AG04449 (cell line): ENCODE measurements at regions of chr9 and their contacts with region 1.

Region 1: GRCh38 chr9:97615439-97616072 is 17.6 kb downstream of the TSTD2 start:
- DNase-seq: peak; percentile 5
- H3K4me3 ChIP-seq: no peak overlapping the region
- CTCF ChIP-seq: peak; percentile 63

Region 2: DNA sequence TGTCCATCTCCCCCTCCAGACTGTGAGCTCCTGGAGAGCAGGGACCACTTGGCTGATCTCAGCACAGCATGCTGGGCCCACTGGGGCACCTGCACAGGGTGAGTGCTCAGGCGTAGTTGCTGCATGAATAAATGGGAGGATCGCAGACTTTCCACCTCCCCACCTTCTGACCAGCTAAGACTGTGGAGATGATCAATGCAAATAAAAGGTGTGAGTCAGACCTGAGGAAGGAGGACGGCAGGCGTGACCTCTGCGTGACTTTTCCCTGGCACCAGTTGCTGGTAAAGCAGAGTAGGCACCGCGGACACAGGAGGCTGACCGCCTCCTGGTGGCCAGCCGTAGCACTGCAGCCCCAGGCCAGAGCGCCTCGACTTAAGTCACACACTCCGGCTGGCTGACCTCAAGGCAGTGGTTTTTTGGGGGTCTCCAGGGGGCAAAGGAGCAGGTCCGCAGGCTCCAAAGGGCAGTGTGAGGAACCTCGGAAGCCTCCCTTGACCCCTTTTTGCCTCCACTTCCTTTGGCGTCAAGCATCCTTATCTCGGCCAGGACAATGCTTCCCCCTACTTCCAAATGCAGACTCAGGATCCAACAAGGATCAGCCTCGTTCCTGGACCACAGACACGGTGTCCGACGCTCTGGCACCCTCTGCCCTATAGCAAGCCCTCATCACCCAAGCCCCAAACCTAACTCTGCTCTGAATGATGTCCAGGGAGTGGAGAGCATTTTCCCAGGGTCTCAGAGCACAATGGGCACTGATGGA is 216.4 kb before region 1 on chr9:
- CTCF ChIA-PET with region 1: interaction called, 13 read pairs
- POLR2A ChIA-PET with region 1: no interaction called
- DNase-seq: peak; percentile 16
- H3K4me3 ChIP-seq: no peak overlapping the region
- CTCF ChIP-seq: peak; percentile 97

Region 3: GRCh38 chr9:97411789-97412625 is 203.5 kb before region 1 on chr9 and contains the start of gene TDRD7:
- CTCF ChIA-PET with region 1: interaction called, 83 read pairs
- POLR2A ChIA-PET with region 1: no interaction called
- DNase-seq: no peak
- H3K4me3 ChIP-seq: peak within 1 kb of the TSS; percentile 69
- CTCF ChIP-seq: peak; percentile 99

Region 4: GRCh38 chr9:97468658-97469448 is 146.7 kb before region 1 on chr9:
- CTCF ChIA-PET with region 1: interaction called, 780 read pairs
- POLR2A ChIA-PET with region 1: no interaction called
- DNase-seq: no peak
- H3K4me3 ChIP-seq: no peak overlapping the region
- CTCF ChIP-seq: peak; percentile 77

Region 5: DNA sequence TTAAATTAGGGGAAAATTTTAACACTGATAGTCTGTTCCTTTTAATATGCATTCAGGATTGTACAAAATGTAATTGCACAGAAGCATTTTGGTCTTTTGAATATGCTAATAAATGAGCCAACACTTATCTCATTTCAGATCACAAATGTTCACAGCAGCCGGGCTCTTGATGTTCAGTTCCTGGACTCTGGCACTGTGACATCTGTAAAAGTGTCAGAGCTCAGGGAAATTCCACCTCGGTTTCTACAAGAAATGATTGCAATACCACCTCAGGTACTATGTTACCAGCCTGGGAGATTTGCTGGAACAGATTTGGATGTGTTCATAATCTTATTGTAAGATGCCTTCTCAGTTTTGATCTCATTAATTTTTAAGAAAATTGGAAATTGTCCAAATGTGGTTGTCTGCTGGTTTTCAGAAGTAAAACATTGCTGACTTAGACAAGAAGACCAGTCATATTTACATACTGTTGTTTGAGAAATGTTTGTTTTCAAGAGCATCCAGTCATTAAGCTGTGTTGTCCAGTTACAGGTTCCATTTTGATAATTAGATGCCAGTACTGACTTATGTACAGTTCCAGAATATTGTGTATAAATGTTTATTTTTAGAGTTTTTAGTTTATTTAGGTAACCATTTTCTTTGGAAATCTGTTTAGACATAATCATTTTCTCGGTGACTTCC is 137.1 kb before region 1 on chr9:
- CTCF ChIA-PET with region 1: interaction called, 780 read pairs
- POLR2A ChIA-PET with region 1: no interaction called
- DNase-seq: no peak
- H3K4me3 ChIP-seq: no peak overlapping the region
- CTCF ChIP-seq: no peak

Region 6: DNA sequence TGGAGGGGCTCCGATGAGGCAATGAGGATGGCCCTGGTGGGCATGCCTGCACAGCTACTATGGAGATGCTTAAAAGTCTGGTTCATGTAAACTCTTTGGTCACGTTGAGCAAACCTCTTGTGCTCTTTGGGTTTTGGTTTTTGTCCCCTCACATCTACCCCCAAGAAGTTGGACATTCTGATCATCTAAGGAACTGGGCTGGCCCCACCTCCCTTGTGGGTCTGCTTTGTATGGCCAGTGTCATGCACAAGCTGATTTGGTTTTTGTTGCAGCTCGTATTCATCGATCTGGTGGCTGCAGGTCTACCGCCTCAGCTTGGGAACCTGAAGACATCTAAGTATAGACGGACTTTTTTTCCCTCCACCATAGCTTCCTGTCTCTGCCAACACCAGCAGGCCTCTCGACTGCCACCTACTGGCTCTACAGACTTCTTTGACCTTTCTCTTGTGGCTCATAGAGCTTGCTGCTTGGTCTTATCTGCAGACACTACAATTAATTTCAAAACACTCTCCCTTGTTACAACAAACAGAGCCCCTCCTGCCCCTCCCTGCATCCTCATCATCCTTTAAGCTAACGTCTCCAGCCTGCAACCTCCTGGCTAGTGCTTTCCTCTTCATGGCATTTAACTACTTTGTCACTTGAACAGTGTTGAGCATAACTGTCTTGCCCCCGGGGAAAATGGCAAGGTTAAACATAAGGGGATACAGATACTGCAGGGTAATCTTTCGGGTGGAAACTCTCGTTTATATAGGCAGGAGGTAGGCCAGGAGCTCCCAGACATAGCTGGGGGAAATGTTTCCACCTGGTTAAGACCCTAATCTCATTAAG is 16.9 kb before region 1 on chr9:
- CTCF ChIA-PET with region 1: interaction called, 96 read pairs
- POLR2A ChIA-PET with region 1: no interaction called
- DNase-seq: peak; percentile 52
- H3K4me3 ChIP-seq: no peak overlapping the region
- CTCF ChIP-seq: peak; percentile 89

Region 7: DNA sequence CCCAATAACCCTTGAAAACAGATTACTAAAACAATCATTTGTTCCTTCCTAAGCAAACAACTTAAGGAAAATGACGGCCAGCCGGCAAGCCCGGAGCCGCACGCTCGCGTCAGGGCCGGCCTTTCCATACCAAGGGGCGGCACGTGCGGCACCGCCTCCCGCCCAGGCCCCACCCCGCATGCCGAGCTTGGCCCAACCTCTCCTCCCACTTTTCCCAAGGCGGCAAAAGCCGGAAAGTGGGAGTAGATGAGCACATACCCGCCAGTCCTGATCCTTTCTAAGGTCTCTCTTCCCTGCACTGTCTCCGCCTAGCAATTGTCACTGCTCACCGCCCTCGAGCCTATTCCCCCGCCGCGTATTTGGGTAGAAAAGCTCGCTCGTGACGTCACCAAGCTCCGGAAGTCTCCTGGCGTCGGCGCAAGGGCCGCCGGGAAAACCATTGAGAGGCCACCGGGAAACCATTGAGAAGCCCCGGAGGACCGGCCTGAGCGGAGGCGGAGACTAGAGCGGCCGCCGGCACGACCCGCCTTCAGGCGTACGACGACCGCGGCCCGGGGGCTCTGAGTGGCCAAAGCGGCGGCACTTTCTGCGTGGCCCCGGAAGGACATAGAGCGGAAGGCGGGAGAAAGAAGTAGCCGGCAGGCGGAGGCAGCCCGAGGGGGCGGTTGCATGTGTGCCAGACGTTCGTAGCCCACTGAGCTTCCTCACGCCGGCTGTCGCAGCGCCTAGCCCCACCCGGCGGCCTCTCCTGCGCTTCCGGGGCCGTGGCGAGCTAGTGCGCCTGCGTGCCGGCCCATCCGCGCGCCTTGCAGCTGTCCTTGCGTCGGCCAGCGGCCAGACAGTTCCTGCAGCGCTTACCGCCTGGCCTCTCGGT is 17.7 kb after region 1 on chr9 and contains the starts of genes NCBP1 and TSTD2:
- CTCF ChIA-PET with region 1: interaction called, 26 read pairs
- POLR2A ChIA-PET with region 1: no interaction called
- DNase-seq: peak; percentile 86
- H3K4me3 ChIP-seq: peak within 1 kb of the TSS; percentile 92
- CTCF ChIP-seq: no peak